Upper lobe of right lung (tissue), 1 donor: ENCODE measurements at regions of chr12 and their contacts with region 1.

Region 1: DNA sequence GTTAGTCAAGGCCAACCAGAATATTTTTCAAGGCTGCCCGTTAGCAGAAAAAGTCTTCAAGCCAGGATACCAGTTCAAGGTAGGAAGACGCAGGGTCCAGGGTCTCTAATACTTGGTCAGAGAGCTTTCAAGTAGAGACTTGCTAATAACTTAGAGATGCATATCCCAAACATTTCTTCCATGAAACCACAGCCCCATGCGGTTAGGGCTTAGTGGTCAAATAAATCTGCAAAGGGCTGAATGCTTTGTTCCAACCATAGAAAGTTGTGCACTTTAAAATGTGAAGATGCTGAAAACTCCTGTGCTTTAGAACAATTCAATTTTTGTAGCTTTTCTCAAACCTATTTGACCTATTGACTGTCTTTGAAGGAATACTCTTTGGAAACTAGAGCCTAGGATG is 208.9 kb downstream of the PIK3C2G start:
- DNase-seq: no peak
- ATAC-seq: no peak
- H3K4me3 ChIP-seq: no peak overlapping the region
- H3K27ac ChIP-seq: no peak overlapping the region
- H3K4me1 ChIP-seq: no peaks in the 10 kb centered on the region
- H3K27me3 ChIP-seq: no peaks in the 10 kb centered on the region
- CTCF ChIP-seq: no peak

Region 2: DNA sequence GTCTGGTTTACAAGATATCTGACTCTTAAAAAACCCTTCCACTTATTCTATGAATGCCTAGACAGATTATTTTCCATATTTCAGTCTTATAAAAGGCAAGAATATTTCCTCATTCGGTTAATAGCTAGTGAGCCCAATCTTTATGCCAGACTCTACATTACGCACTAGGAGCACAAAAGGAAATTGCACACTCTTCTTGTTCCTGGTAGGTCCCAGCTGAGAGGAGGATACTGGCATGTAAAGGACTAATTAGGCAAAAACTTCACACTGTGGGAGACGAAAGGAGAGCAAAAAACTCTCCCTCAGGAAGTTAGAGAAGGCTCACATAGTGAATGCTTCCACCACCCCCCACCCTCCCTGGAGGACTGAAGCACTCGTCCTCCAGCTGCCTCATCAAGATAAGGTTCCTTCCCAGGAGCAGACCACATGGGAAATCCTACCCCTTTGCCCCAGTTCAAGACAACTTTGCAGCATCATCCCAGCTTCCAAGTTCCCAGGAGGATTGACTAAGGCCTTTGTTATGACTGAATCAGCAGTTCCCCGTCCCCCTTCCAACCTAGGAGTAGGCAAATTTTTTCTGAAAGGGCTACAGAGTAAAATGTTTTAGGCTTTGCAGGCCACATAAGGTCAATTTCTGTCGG is 282.1 kb after region 1 on chr12:
- intact Hi-C with region 1: loop called (anchors 5 kb)
- DNase-seq: no peak
- ATAC-seq: no peak
- H3K4me3 ChIP-seq: no peak overlapping the region
- H3K27ac ChIP-seq: no peak overlapping the region
- H3K4me1 ChIP-seq: peaks cover 6% of the 10 kb centered on the region
- H3K27me3 ChIP-seq: no peaks in the 10 kb centered on the region
- CTCF ChIP-seq: no peak